Heart left ventricle (tissue), 16 donors: ENCODE measurements at regions of chr3 and their contacts with region 1.

Region 1: DNA sequence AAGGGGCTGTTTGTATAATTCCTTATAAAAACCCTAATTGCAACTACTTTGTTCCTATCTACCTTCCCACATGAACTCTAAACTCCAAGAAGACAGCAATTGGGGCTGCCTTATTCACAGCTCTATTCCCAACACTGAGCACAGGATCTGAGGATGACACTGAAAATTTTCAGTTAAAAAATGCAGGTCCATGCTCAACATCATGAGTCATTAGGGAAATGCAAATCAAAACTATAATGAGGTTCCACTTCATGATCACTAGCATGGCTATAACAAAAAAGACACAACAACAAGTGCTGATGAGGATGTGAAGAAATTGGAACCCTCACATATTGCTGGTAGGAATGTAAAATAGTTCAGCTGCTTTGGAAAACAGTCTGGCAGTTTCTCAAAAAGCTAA is 12.9 kb downstream of the SUMF1 start:
- DNase-seq: no peak
- ATAC-seq: no peak
- H3K4me3 ChIP-seq: no peak overlapping the region
- H3K27ac ChIP-seq: no peak overlapping the region
- H3K4me1 ChIP-seq: peaks cover 0 to 4% (median 0%) of the 10 kb centered on the region in 12 donors
- H3K27me3 ChIP-seq: no peaks in the 10 kb centered on the region
- CTCF ChIP-seq: no peak
- POLR2A ChIP-seq: no peak

Region 2: GRCh38 chr3:4222574-4223175 is 231.5 kb before region 1 on chr3:
- intact Hi-C with region 1: no loop called
- DNase-seq: no peak
- ATAC-seq: no peak
- H3K4me3 ChIP-seq: no peak overlapping the region
- H3K27ac ChIP-seq: no peak overlapping the region
- H3K4me1 ChIP-seq: no peaks in the 10 kb centered on the region
- H3K27me3 ChIP-seq: no peaks in the 10 kb centered on the region
- CTCF ChIP-seq: no peak
- POLR2A ChIP-seq: no peak

Region 3: GRCh38 chr3:4438293-4438692 is 15.8 kb before region 1 on chr3:
- intact Hi-C with region 1: loop called in 1 of 10 experiments (anchors 2 kb)
- DNase-seq: no peak
- ATAC-seq: no peak
- H3K4me3 ChIP-seq: no peak overlapping the region
- H3K27ac ChIP-seq: no peak overlapping the region
- H3K4me1 ChIP-seq: no peaks in the 10 kb centered on the region
- H3K27me3 ChIP-seq: no peaks in the 10 kb centered on the region
- CTCF ChIP-seq: no peak
- POLR2A ChIP-seq: no peak